ENCODE measurements at regions of chr17 and their contacts with region 1.

Region 1: GRCh38 chr17:80426681-80427326 is 11.8 kb downstream of the ENDOV start:
- DNase-seq: peak; percentile 92
- H3K4me3 Mint-ChIP-seq: no peak overlapping the region
- H3K27ac Mint-ChIP-seq: no peak overlapping the region
- H3K4me1 Mint-ChIP-seq: peaks cover 8% of the 10 kb centered on the region
- H3K27me3 Mint-ChIP-seq: no peaks in the 10 kb centered on the region

Region 2: DNA sequence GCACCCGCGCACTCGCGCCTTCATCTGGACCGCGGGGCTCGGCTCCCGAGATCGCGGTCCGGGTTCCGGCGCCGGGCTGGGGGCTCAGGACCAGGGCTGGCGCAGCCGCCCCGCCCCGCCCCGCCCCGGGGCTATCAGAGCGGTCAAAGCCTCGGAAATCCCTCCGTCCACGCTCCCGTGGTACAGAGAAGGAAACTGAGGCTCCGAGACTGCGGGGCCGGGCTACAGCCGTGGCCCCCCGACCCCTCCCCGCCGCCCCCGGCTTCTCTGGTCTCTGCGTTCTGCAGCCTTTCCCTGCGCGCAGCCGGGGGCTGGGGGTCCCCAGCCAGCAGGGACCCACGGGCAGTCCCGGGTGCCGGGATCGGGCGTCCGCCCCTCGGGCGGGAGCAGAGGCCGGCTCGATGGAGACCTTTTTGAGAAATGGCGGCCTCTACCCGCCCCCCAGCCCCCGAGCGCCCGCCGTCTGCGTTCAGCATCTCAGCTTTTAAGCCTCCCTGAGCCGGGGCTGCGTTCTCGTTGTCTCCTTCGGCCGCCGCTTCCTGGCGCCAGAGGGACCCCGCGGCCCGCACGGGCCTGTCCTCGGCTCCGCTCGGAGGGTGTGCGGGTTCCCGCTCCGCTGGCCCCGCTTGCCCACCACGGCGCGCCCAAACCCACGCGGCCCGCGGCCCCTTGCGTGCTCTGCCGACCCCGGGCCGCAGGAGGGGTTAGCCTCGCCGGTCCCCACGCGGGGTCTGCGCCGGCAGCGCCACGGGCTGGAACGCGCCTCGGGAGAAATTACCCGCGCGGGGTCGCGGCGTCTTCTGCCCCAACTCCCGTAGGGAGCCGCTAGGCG is 51.1 kb after region 1 on chr17:
- CTCF ChIA-PET with region 1: interaction called, 3 read pairs
- intact Hi-C with region 1: loop called (anchors 5 kb)
- DNase-seq: peak; percentile 65
- H3K4me3 Mint-ChIP-seq: no peak overlapping the region
- H3K27ac Mint-ChIP-seq: no peak overlapping the region
- H3K4me1 Mint-ChIP-seq: peaks cover 14% of the 10 kb centered on the region
- H3K27me3 Mint-ChIP-seq: peaks cover 59% of the 10 kb centered on the region

Region 3: DNA sequence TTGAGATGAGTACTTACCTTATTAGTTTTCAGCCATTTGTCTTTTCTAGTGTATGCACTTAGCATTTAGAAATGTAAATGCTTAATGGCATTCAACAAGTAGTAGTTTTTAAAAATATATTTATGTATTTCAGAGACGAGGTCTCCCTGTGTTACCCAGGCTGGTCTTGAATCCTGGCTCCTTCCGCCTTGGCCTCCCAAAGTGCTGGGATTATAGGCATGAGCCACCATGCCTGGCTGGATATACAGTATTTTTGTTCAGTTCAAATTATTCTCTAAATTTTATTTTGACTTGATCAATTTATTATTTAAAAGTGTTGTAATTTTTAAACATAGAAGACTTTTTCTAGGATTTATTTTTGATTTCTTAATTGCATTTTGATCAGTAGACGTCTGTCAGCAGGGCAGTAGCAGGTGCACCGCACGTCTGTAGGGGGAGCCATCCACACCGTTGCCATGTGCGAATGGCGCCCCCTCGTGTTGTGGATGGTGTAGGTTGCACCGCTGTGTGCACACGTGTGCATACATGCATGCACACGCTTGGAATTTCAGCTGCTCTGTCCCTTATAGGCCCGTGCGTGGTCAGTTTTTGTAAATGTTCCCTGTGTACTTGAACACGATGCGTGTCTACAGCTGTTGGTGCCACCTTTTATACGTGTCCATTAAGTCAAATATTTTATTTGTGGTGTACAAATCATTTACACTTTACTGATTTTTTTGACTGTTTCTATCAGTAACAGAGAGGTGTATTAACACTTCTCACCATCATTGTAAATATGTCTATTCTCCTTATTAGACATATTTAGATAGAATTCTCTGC is 148.5 kb after region 1 on chr17:
- CTCF ChIA-PET with region 1: interaction called, 10 read pairs
- intact Hi-C with region 1: loop called (anchors 1 kb)
- DNase-seq: peak; percentile 97
- H3K4me3 Mint-ChIP-seq: no peak overlapping the region
- H3K27ac Mint-ChIP-seq: no peak overlapping the region
- H3K4me1 Mint-ChIP-seq: peaks cover 24% of the 10 kb centered on the region
- H3K27me3 Mint-ChIP-seq: no peaks in the 10 kb centered on the region

Region 4: GRCh38 chr17:80899402-80900268 is 472.8 kb after region 1 on chr17:
- CTCF ChIA-PET with region 1: interaction called, 7 read pairs
- intact Hi-C with region 1: loop called (anchors 1 kb)
- DNase-seq: peak; percentile 93
- H3K4me3 Mint-ChIP-seq: no peak overlapping the region
- H3K27ac Mint-ChIP-seq: no peak overlapping the region
- H3K4me1 Mint-ChIP-seq: peaks cover 38% of the 10 kb centered on the region
- H3K27me3 Mint-ChIP-seq: no peaks in the 10 kb centered on the region

Region 5: DNA sequence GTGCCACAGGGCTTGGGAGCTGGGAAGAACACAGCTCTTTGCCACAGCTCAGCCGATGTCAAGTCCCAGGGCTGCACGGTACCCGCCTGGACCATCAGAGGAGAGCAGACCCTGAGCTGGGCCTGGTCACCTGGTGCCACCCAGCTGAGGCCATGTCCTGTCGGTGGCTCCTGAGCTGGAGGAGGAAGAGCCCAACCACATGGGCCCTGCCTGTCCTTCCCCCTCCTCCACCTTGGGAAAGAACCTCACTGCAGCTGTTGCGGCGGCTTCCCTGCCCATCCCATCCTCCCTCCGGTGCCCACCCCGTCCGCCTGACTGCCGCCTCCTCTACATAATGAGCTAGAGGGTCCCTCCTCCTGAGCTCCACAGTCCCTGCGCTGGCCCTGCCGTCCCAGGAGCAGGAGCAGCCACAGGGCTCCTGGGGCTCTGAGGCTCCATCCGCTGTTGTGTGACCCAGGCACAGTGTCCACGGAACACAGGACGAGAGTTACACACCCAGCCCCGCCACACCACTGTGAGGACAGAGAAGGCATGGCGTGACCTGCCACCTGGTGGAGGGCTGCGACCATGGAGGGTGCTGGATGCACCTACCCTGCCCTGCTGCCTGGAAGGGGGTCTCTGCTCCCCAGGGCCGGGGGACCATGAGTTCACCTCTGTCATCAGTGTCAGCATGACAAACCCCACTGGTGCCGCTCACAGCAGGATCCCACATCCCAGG is 543.4 kb after region 1 on chr17:
- CTCF ChIA-PET with region 1: interaction called, 20 read pairs
- intact Hi-C with region 1: loop called (anchors 1 kb)
- DNase-seq: peak; percentile 72
- H3K4me3 Mint-ChIP-seq: no peak overlapping the region
- H3K27ac Mint-ChIP-seq: no peak overlapping the region
- H3K4me1 Mint-ChIP-seq: peaks cover 5% of the 10 kb centered on the region
- H3K27me3 Mint-ChIP-seq: no peaks in the 10 kb centered on the region

Region 6: DNA sequence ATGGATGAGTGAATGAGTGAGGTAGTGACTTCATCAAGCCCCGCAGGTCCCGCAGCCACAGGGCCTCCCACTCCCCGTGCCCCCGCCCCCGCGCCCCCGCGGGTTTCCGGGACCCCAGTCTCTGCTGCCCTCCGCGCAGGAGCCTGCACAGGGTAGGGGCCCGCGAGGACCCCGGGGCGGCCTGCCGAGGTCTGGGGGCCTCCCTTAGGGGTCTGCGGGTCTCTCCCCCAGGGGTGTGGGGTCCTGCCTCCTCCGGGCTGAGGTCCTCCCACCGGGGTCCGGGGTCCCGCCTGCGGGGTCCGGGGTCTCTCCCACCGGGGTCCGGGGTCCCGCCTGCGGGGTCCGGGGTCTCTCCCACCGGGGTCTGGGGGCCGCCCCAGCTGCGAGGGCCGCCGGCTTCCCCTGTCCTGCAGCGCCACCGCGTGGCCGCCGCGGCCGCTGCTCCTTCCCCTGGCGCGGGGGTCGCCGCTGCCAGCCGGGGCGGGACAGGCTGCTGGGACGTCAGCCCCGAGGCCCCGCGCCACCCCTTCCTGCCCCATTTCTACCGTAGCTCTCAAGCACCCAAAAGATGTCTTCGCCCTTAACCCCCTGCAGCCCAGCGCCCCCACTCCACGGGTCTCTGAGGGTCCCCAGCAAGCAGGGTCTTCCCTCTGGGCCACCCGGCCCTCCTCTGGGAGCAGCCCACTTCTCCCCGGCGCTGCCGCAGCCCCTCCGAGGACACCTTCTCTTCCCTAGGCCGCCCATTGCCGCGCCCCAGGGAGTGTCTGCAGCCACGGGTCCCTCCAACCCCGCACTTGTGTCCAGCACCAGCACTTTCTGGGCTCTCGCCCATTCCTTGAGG is 554.5 kb after region 1 on chr17:
- CTCF ChIA-PET with region 1: no interaction called
- intact Hi-C with region 1: loop called (anchors 1 kb)
- DNase-seq: peak; percentile 27
- H3K4me3 Mint-ChIP-seq: no peak overlapping the region
- H3K27ac Mint-ChIP-seq: no peak overlapping the region
- H3K4me1 Mint-ChIP-seq: peaks cover 12% of the 10 kb centered on the region
- H3K27me3 Mint-ChIP-seq: no peaks in the 10 kb centered on the region

Region 7: GRCh38 chr17:81101614-81102306 is 675.0 kb after region 1 on chr17:
- CTCF ChIA-PET with region 1: no interaction called
- intact Hi-C with region 1: loop called (anchors 5 kb)
- DNase-seq: peak; percentile 89
- H3K4me3 Mint-ChIP-seq: no peak overlapping the region
- H3K27ac Mint-ChIP-seq: no peak overlapping the region
- H3K4me1 Mint-ChIP-seq: peaks cover 6% of the 10 kb centered on the region
- H3K27me3 Mint-ChIP-seq: no peaks in the 10 kb centered on the region